ENCODE measurements at regions of chr12 and their contacts with region 1.

Region 1: DNA sequence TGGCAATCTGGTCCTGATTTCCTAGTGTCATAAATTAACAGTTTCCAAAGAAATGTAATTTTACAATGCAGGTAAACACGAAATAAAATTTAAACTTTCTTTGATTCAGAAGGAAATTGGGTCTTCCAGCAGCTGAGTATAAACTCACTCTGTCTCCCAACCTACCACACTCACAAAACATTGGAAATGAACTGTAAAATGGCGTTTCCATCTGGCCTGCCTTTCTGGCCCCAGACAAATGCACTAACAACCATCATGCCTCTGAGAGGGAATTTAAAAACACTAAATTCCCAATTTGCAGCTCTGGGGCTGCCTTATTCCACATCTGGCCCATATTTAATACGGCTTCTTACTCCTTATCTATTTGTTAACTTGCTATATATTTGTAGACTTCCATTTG is 19.3 kb downstream of the ATP2B1 start:
- DNase-seq: no peak
- H3K4me3 ChIP-seq: no peak overlapping the region
- H3K27ac ChIP-seq: no peak overlapping the region
- H3K4me1 ChIP-seq: 0 out of 2 replicates have a peak, but pooled peaks cover 5% of the 10 kb centered on the region
- H3K27me3 ChIP-seq: no peaks in the 10 kb centered on the region
- CTCF ChIP-seq: no peak

Region 2: DNA sequence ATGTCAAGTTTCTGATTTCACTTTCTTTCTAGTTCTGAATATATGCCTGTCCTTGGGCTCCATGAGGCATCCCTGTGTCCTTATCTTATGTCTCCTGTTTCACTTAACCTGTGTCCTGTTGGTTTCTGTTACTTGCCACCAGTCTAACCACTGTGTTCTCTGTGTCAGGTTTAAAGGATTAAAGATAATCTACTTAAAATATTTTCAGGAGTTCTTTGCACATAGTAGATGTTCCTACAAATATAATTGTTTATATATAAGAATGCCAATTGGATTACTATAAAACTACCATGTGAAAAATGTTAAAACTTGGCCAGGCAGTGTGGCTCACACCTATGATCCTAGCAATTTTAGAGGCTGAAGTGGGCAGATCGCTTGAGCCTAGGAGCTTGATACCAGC is 859.3 kb after region 1 on chr12:
- CTCF ChIA-PET with region 1: no interaction called
- POLR2A ChIA-PET with region 1: interaction called, 11 read pairs
- intact Hi-C with region 1: no loop called
- DNase-seq: no peak
- H3K4me3 ChIP-seq: no peak overlapping the region
- H3K27ac ChIP-seq: no peak overlapping the region
- H3K4me1 ChIP-seq: no peaks in the 10 kb centered on the region
- H3K27me3 ChIP-seq: no peaks in the 10 kb centered on the region
- CTCF ChIP-seq: no peak